A549 (cell line): ENCODE measurements at regions of chr17 and their contacts with region 1.

Region 1: GRCh38 chr17:58517734-58518609 is 3.5 kb upstream of the MTMR4 start:
- DNase-seq: peak; percentile 100
- ATAC-seq: peak; percentile 84 to 90
- H3K4me3 ChIP-seq: peak overlapping the region; percentile 72
- H3K27ac ChIP-seq: peak overlapping the region; percentile 76 to 87
- H3K4me1 ChIP-seq: peaks cover 15% of the 10 kb centered on the region
- CTCF ChIP-seq: no peak
- EP300 ChIP-seq: no peak
- POLR2A ChIP-seq: peak; percentile 48
- RAD21 ChIP-seq: no peak

Region 2: GRCh38 chr17:58504826-58505521 is 13.0 kb before region 1 on chr17:
- CTCF ChIA-PET with region 1: interaction called, 12 read pairs
- POLR2A ChIA-PET with region 1: no interaction called
- DNase-seq: no peak
- ATAC-seq: no peak
- H3K4me3 ChIP-seq: no peak overlapping the region
- H3K27ac ChIP-seq: no peak overlapping the region
- H3K4me1 ChIP-seq: no peaks in the 10 kb centered on the region
- CTCF ChIP-seq: no peak
- EP300 ChIP-seq: no peak
- POLR2A ChIP-seq: no peak
- RAD21 ChIP-seq: no peak

Region 3: GRCh38 chr17:58577642-58578091 is 59.7 kb after region 1 on chr17:
- CTCF ChIA-PET with region 1: interaction called, 15 read pairs
- POLR2A ChIA-PET with region 1: no interaction called
- DNase-seq: peak; percentile 53 to 70
- ATAC-seq: peak; percentile 68 to 86
- H3K4me3 ChIP-seq: no peak overlapping the region
- H3K27ac ChIP-seq: no peak overlapping the region
- H3K4me1 ChIP-seq: peaks cover 14% of the 10 kb centered on the region; the same call in 2 of the 3 replicates
- CTCF ChIP-seq: peak; percentile 69
- EP300 ChIP-seq: no peak
- POLR2A ChIP-seq: no peak
- RAD21 ChIP-seq: peak; percentile 47 to 48; a peak in 4 of 5 replicates

Region 4: DNA sequence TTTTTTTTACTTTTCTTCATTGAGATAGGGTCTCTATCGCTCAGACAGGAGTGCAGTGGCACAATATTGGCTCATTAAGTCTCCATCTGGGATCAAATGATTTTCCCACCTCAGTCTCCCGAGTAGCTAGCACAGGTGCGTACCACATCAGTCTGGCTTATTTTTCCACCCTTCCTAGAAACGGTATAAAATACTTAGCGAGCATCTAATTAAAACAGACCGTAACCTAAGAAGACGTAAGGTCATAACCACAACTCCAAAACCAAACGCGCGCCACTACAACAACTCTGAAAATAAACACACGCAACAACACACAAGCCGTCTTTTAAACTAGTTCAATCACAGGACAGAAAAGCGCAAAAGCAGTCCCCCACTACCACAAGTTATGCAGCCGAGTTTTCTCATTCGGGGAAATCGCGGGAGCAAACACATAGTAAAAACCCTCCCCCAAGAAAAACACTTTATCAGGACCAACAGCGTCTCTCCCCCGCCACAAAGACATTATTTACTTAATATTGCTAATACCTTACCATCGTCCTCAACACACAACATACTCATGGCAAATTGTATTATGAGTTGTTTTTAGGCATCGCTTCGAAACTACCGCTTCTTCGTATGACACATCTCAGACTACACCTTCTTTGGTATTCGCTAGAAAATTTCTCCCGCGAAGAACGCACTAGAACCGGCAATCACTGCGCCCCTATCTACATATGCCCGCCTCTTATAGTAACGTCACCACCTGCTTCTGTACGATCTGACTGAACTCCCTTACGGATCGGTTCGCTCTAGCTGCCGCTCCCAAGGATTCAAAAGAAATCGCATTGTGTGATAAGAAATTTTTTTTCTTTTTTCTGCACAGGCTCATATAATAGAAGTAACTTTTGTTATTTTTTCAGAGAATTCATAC is 141.1 kb after region 1 on chr17:
- CTCF ChIA-PET with region 1: interaction called, 8 read pairs
- POLR2A ChIA-PET with region 1: interaction called, 23 read pairs
- DNase-seq: peak; percentile 92 to 95
- ATAC-seq: peak; percentile 92 to 95
- H3K4me3 ChIP-seq: peak overlapping the region; percentile 56
- H3K27ac ChIP-seq: peak overlapping the region; percentile 88 to 89
- H3K4me1 ChIP-seq: peaks cover 3% of the 10 kb centered on the region; the same call in 1 of the 3 replicates
- CTCF ChIP-seq: no peak; the same call in 2 of the 3 replicates
- EP300 ChIP-seq: peak in 1 of 2 experiments; percentile 46; a peak in 1 of 5 replicates
- POLR2A ChIP-seq: peak; percentile 100
- RAD21 ChIP-seq: peak; percentile 10 to 45; a peak in 3 of 5 replicates

Region 5: DNA sequence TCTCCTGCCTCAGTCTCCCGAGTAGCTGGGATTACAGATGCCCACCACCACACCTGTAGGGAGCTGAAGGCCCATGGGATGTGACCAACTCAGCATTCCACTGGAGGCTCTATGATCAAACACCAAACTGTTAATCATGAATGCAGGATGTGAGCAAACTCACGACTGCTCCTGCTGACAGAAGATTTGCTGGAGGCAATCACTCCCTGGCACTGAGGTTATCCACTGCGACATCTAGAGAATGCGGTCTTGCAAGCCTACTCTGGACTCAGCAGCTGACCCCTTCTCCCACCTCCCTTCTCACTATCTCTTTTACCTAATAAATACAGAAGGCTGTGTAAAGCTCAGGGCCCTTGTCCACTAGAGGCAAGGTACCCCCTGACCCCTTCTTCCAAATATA is 169.0 kb after region 1 on chr17:
- CTCF ChIA-PET with region 1: interaction called, 12 read pairs
- POLR2A ChIA-PET with region 1: no interaction called
- DNase-seq: no peak
- ATAC-seq: no peak
- H3K4me3 ChIP-seq: no peak overlapping the region
- H3K27ac ChIP-seq: no peak overlapping the region
- H3K4me1 ChIP-seq: 0 out of 3 replicates have a peak, but pooled peaks cover under 1% of the 10 kb centered on the region
- CTCF ChIP-seq: no peak
- EP300 ChIP-seq: no peak
- POLR2A ChIP-seq: no peak
- RAD21 ChIP-seq: no peak